Transverse colon (tissue), 4 donors: ENCODE measurements at regions of chr11 and their contacts with region 1.

Region 1: GRCh38 chr11:39651857-39652461 is 1807.5 kb downstream of the LRRC4C start:
- DNase-seq: no peak
- H3K4me3 ChIP-seq: no peak overlapping the region
- H3K27ac ChIP-seq: no peak overlapping the region
- H3K4me1 ChIP-seq: no peaks in the 10 kb centered on the region
- H3K27me3 ChIP-seq: no peaks in the 10 kb centered on the region
- CTCF ChIP-seq: no peak
- EP300 ChIP-seq: no peak
- POLR2A ChIP-seq: no peak

Region 2: GRCh38 chr11:39668640-39669039 is 16.7 kb after region 1 on chr11:
- in situ Hi-C with region 1: no loop called
- intact Hi-C with region 1: loop called (anchors 1 kb)
- DNase-seq: no peak
- H3K4me3 ChIP-seq: no peak overlapping the region
- H3K27ac ChIP-seq: no peak overlapping the region
- H3K4me1 ChIP-seq: no peaks in the 10 kb centered on the region
- H3K27me3 ChIP-seq: no peaks in the 10 kb centered on the region
- CTCF ChIP-seq: no peak
- EP300 ChIP-seq: no peak
- POLR2A ChIP-seq: no peak

Region 3: GRCh38 chr11:39690856-39691255 is 38.9 kb after region 1 on chr11:
- in situ Hi-C with region 1: no loop called
- intact Hi-C with region 1: no loop called
- DNase-seq: no peak
- H3K4me3 ChIP-seq: no peak overlapping the region
- H3K27ac ChIP-seq: no peak overlapping the region
- H3K4me1 ChIP-seq: no peaks in the 10 kb centered on the region
- H3K27me3 ChIP-seq: no peaks in the 10 kb centered on the region
- CTCF ChIP-seq: no peak
- EP300 ChIP-seq: no peak
- POLR2A ChIP-seq: no peak